HEK293T (cell line): ENCODE measurements at regions of chr11 and their contacts with region 1.

Region 1: DNA sequence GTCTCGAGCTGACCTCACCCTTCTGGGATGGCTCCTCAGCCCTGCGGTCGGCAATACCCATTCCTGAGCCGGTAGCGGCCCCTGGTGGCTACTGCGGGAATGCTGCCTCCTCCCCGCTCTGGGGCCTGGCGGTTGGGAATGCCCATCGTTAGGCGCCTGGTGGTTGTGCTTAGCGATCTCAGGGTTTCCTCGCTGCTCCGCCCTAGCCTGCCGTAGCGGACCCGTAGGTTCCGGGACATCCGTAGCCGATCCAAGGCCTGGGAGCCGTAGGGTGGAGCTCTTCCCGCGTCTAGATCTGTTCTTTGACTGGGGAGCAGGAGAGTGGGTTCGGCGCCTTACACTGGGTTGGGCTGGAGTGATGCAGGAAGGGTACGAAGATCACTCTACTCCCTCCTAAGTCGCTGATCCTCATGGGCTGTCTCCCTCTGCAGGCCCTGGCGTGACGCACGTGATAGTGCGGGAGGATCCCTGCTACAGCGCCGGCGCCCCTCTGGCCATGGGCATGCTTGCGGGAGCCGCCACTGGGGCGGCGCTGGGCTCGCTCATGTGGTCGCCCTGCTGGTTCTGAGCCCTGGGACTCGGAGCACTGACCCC is 14.8 kb downstream of the PLEKHB1 start:
- DNase-seq: peak; percentile 98

Region 2: GRCh38 chr11:73478738-73479347 is 182.3 kb before region 1 on chr11:
- CTCF ChIA-PET with region 1: interaction called, 11 read pairs
- POLR2A ChIA-PET with region 1: no interaction called
- DNase-seq: peak; percentile 55

Region 3: DNA sequence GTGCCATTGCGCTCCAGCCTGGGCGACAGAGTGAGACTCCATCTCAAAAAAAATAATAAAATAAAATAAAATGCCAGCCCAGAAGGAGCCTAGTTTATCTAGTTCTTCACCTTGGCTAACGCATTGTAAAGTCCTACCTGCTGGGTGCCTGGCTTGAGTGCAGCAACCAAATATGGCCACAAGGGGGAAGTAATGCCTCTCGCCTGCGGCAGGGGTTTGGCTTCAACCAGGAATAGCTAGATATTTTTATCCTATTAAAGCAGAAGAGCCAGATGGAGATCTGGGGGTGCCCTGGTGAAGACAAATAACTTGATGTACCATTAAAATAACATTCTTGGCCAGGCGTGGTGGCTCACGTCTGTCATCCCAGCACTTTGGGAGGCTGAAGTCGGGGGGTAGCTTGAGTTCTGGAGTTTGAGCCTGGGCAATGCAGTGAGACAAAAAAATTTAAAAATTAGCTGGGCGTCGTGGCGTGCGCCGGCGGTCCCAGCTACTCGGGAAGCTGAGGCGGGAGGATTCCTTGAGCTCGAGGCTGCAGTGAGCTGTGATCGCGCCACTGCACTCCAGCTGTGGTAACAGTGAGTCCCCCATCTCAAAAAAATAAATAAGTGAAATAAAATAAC is 35.3 kb before region 1 on chr11:
- CTCF ChIA-PET with region 1: interaction called, 42 read pairs
- POLR2A ChIA-PET with region 1: interaction called, 3 read pairs
- DNase-seq: peak; percentile 87

Region 4: GRCh38 chr11:73647459-73648100 is 13.6 kb before region 1 on chr11:
- CTCF ChIA-PET with region 1: interaction called, 14 read pairs
- POLR2A ChIA-PET with region 1: no interaction called
- DNase-seq: peak; percentile 95